ENCODE measurements at regions of chr11 and their contacts with region 1.

Region 1: DNA sequence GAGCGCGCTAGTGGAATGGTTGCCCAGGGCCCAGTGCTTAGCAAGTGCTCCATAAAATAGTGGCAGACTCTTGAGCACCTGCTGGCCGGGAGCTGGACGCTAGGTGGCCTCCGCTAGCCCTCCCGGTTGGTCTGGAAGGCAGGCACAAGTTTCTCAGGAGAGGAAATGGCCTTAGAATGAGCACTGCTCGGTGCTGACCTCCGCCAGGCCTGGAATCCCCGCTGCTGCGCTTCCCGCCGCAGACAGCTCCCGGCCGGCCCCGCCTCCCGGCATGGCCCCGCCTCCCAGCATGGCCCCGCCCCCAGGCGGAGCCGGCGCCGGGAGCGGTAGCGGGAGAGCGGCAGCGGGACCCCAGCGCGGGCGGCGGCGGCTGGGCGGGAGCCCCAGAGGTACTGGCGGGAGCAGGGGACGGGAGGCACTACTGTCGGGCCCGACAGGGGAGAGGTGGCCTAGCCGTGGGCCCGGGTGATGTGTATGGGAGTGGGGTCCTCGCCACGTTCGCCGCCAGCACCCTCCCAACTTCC is at the start of gene SIPA1:
- DNase-seq: peak; percentile 74
- H3K4me3 Mint-ChIP-seq: peak within 1 kb of the TSS; percentile 82
- H3K27ac Mint-ChIP-seq: peak within 1 kb of the TSS; percentile 83
- H3K4me1 Mint-ChIP-seq: peaks cover 40% of the 10 kb centered on the region
- H3K27me3 Mint-ChIP-seq: no peaks in the 10 kb centered on the region
- total RNA-seq, gene SIPA1: 117 and 130 TPM in 2 replicates

Region 2: DNA sequence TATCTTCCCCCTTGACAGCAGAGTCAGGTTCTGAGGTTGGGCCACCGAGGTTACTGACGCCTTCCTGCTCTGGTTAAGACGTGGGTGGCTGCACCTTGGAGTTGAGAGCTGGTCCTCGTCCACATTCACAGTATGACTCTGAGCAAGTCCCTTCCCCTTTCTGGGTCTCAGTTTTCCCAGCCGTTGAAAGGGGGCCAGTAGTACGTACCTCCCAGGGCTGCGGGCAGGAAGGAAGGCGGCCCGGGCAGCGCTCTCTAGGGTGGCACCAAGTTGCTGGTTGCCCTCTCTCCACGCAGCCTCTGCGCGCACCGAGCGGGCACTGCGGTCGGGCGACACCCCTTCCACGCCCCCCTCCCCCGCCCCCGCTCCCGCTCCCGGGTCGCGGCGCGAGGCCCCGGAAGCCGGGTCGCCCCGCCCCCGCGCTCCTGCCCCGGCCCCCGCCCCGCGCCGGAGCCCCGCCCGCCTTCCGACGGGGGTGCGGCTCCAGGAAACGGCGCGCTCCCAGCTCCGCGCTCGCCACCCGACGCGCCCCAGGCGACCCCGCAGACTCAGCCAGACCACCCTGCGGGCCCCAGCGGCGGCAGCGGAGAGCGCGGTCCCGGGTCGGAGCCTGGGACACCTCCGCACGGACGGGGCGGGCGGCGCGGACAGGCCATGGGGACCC is 62.2 kb before region 1 on chr11 and contains the start of gene EHBP1L1:
- intact Hi-C with region 1: loop called (anchors 1 kb)
- DNase-seq: peak; percentile 76
- H3K4me3 Mint-ChIP-seq: peak within 1 kb of the TSS; percentile 92
- H3K27ac Mint-ChIP-seq: peak within 1 kb of the TSS; percentile 88
- H3K4me1 Mint-ChIP-seq: peaks cover 48% of the 10 kb centered on the region
- H3K27me3 Mint-ChIP-seq: no peaks in the 10 kb centered on the region
- total RNA-seq, gene EHBP1L1: 168 and 178 TPM in 2 replicates

Region 3: DNA sequence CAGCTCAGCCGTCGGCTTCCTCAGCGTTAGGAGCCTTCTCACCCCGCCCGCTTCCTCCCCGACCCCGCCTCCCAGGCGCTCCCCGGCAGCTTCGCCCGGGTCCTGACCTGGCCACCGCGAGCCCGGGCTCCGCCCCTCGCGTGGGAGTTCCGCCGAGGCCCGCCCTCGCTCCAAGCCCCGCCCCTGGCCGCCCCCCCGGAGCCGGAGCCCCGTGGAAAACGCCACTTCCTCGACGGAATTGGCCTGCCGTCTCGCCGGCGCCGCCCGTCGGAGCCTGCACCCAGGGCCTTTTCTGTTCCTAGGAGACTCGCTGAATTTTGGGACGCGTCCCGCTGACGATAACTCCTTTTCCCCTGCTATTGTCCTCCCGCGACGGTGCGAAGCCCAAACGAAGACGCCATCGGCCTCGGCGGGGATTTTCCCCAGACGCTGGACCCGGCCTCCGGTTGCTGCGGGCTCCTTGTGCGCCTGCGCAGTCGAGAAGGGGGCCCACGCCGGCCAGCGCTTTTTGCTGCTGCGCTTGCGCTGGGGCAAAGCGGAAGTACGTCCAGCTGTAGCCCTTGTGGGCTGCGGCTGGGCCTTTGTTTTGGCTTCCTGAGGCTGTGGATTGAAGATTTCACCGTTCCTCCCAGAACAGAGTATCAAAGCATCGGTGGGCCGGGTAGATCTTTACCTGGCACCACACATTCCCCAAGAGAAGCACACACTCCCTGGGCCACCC is 14.8 kb after region 1 on chr11:
- intact Hi-C with region 1: loop called (anchors 1 kb)
- DNase-seq: peak; percentile 95
- H3K4me3 Mint-ChIP-seq: peak overlapping the region; percentile 88
- H3K27ac Mint-ChIP-seq: peak overlapping the region; percentile 97
- H3K4me1 Mint-ChIP-seq: peaks cover 42% of the 10 kb centered on the region
- H3K27me3 Mint-ChIP-seq: peaks cover 3% of the 10 kb centered on the region

Measured in activated T-helper 1 cell treated with anti-CD3 and anti-CD28 coated beads, Interleukin-12 subunit alpha, Interleukin-12 subunit beta, Interleukin-2, Interleukin-4 antibody, amounts not matched to agents 30 ng/mL and 10 ng/mL and 1 ng/mL, durations not matched to agents 14 hours and 24 hours and 36 hours (primary cell).